Caco-2 (cell line): ENCODE measurements at regions of chr15 and their contacts with region 1.

Region 1: DNA sequence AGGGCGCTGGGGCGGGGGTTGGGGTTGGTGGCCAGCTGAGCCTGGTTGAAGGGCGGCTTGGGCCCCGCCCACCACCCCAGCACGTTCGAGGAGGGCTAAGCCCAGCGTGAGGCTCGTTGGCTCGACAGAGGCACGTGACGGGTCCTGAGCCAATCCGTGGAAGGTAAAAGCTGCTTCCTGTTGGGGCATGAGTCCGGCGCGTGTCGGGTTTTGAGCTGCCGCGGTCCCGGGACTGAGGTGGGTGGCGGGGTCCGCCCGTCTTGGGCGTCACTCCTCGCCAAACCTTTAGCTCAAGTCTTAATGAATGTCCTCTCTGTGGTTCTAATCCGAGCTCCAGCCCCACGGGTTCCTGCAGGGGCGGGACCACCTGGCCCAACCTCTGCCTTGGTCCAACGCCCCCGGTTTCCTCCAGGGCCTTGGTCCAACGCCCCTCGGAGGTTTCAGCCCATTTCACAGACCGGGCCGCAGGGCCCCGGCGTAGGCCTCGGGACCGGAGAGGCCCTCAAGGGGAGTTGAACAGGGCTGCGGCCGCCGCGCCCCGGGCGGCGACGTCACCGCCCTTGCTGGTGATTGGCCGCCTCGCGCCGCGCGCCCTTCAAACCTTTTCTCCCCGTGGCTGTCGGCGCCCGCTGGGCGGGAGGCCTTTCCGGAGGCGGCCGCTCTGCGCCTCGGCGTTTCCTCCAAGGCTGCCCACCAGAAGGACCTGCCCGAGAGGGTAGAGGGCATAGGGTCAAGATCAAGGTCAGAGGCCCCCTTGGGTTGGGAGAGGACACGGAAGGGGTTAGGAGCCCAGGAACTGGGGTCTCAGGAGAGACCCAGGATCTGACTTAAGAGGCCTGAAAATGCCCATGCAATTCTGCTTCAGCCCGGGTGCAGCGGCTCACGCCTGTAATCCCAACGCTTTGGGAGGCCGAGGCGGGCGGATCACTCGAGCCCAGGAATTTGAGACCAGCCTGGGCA is at the start of gene RCCD1:
- DNase-seq: peak; percentile 96 to 97
- H3K4me3 ChIP-seq: peak within 1 kb of the TSS; percentile 99
- H3K4me3 Mint-ChIP-seq: peak within 1 kb of the TSS; percentile 76
- H3K27ac Mint-ChIP-seq: peak within 1 kb of the TSS; percentile 87
- H3K4me1 ChIP-seq: peaks cover 4% of the 10 kb centered on the region
- H3K4me1 Mint-ChIP-seq: peaks cover 9% of the 10 kb centered on the region
- H3K27me3 ChIP-seq: no peaks in the 10 kb centered on the region
- H3K27me3 Mint-ChIP-seq: no peaks in the 10 kb centered on the region
- CTCF ChIP-seq: no peak
- total RNA-seq, gene RCCD1: 26.1 and 29.6 TPM in 2 replicates

Region 2: DNA sequence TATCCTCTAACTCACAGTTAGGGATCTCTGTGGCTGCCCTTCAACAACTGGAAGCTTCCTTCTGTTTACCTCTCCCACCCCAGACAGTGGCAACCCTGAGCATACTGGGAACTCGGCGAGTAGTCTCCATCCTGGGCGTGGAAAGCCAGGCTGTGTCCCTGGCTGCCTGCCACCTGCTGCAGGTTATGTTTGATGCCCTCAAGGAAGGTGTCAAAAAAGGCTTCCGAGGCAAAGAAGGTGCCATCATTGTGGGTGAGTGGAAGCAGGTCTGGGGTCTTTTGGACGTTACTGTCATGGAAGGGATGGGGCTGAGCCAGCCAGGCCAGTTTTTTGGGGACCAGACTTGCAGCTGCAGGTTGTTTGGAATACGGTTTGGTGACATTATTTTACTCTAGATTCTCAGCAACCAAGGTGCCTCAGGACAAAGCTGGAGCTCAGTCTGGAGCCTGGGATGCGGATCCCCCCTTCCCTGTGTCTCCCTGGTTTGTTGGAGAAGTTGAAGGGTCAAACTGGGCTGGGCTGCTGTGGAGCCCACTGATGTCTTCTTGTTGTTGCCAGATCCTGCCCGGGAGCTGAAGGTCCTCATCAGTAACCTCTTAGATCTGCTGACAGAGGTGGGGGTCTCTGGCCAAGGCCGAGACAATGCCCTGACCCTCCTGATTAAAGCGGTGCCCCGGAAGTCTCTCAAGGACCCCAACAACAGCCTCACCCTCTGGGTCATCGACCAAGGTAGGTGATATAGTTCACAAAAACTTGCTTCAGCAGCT is 12.5 kb before region 1 on chr15:
- CTCF ChIA-PET with region 1: no interaction called
- POLR2A ChIA-PET with region 1: interaction called, 15 read pairs
- intact Hi-C with region 1: no loop called
- DNase-seq: no peak
- H3K4me3 ChIP-seq: no peak overlapping the region
- H3K4me3 Mint-ChIP-seq: no peak overlapping the region
- H3K27ac Mint-ChIP-seq: no peak overlapping the region
- H3K4me1 ChIP-seq: no peaks in the 10 kb centered on the region
- H3K4me1 Mint-ChIP-seq: no peaks in the 10 kb centered on the region
- H3K27me3 ChIP-seq: no peaks in the 10 kb centered on the region
- H3K27me3 Mint-ChIP-seq: no peaks in the 10 kb centered on the region
- CTCF ChIP-seq: no peak

Region 3: GRCh38 chr15:90994417-90995311 is 39.7 kb after region 1 on chr15 and contains the start of gene PRC1:
- CTCF ChIA-PET with region 1: no interaction called
- POLR2A ChIA-PET with region 1: interaction called, 4 read pairs
- intact Hi-C with region 1: loop called (anchors 5 kb)
- DNase-seq: peak; percentile 98 to 99
- H3K4me3 ChIP-seq: peak within 1 kb of the TSS; percentile 83
- H3K4me3 Mint-ChIP-seq: peak within 1 kb of the TSS; percentile 87
- H3K27ac Mint-ChIP-seq: peak within 1 kb of the TSS; percentile 96
- H3K4me1 ChIP-seq: peaks cover 13% of the 10 kb centered on the region
- H3K4me1 Mint-ChIP-seq: peaks cover 11% of the 10 kb centered on the region
- H3K27me3 ChIP-seq: no peaks in the 10 kb centered on the region
- H3K27me3 Mint-ChIP-seq: no peaks in the 10 kb centered on the region
- CTCF ChIP-seq: no peak
- total RNA-seq, gene PRC1: 142 and 145 TPM in 2 replicates